HCT116 (cell line): ENCODE measurements at regions of chr17 and their contacts with region 1.

Region 1: DNA sequence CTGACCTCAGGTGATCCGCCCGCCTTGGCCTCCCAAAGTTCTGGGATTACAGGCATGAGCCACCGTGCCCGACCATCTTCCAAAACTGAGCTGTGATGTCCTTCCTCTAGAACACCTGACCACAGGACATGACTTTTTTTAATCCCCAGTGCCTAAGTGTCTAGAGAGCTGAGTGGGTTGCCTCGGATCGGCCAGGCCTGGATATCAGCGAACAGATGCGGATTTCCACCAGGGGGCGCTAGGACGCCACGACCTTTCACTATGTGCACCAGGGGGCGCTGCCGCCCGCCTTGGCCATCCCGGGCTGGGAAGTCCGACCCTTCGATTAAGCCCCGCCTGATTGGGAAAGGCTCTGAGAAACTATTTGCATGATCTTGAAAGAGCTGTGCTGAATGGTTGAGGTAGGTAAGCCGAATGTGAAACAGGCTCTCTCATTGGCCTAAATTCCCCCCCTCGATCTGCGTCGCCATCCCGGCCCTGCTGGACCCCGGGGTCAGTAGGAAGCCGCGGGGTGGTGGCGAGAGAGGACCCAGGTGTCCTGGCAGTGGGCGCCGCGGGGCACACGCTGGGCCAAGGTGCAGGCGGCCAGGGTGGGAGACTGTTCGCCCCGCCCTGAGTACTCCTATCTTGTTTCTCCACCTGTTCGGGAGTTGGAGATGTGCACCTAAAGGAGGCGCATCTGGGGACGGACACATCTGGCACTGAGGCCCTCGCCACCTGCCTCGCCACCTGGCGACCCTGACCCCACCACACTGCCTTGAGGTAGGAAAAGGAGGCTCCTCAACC is at the start of gene ACBD4:
- DNase-seq: peak; percentile 96
- ATAC-seq: peak; percentile 73
- H3K4me3 ChIP-seq: peak within 1 kb of the TSS; percentile 41 to 50
- H3K27ac ChIP-seq: peak within 1 kb of the TSS; percentile 38; the same call in 1 of the 2 replicates
- H3K4me1 ChIP-seq: peaks cover 16 to 36% of the 10 kb centered on the region in 2 experiments
- H3K27me3 ChIP-seq: no peaks in the 10 kb centered on the region
- CTCF ChIP-seq: peak; percentile 100
- POLR2A ChIP-seq: no peak
- RAD21 ChIP-seq: peak; percentile 100
- total RNA-seq, gene ACBD4: 13.6 TPM

Region 2: GRCh38 chr17:45060797-45061605 is 74.4 kb before region 1 on chr17 and contains the start of gene NMT1:
- CTCF ChIA-PET with region 1: interaction called, 7 read pairs
- POLR2A ChIA-PET with region 1: no interaction called
- RAD21 ChIA-PET with region 1: no interaction called
- intact Hi-C with region 1: loop called (anchors 5 kb)
- DNase-seq: peak; percentile 99
- ATAC-seq: peak; percentile 90
- H3K4me3 ChIP-seq: peak within 1 kb of the TSS; percentile 98 to 99
- H3K27ac ChIP-seq: peak within 1 kb of the TSS; percentile 93
- H3K4me1 ChIP-seq: peaks cover 10 to 19% of the 10 kb centered on the region in 2 experiments
- H3K27me3 ChIP-seq: no peaks in the 10 kb centered on the region
- CTCF ChIP-seq: no peak
- POLR2A ChIP-seq: peak; percentile 81
- RAD21 ChIP-seq: no peak
- total RNA-seq, gene NMT1: 173 TPM

Region 3: DNA sequence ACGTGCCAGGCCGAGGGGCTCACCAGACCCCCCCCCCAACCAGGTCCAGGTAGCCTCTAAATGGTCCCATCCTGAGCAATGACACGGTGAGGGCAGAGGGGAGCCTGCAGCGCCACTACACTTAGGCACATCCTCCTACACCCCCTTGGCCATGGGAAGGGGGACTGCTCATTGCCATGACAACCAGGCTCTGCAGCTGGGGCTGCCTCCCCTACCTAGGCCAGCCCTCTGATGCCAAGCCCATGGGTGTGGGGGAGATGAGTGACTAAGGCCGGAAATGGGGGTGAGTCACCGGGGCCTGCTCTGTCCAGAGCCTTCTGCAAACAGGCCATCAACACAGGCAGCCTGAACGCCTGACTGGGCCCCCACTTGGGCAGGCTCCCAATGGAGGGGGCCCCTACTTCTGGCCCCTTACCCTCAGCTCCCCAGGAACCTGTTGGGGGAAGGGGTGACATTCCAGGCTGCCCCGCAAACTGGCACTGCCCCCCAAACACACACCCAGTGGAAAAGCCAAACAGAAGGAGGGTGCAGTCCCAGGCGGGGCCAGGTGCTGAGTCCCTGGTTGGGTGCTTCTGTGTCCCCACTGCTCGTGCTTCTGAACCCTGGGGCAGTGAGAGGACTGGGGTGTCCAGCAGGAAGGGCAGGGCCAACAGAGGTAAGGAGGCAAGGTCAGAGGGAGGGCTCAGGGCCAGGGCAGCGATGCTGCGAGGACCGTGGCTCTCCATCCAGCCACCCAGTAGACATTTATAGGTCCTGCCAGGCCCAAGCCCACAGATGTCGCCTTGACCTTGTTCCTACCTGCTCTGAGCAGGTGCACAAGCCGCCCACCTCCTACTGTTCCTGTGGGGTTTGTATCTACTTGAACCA is 11.2 kb before region 1 on chr17:
- CTCF ChIA-PET with region 1: interaction called, 18 read pairs
- POLR2A ChIA-PET with region 1: interaction called, 3 read pairs
- RAD21 ChIA-PET with region 1: no interaction called
- intact Hi-C with region 1: no loop called
- DNase-seq: peak; percentile 69
- ATAC-seq: peak; percentile 76
- H3K4me3 ChIP-seq: peak overlapping the region; percentile 32 to 57
- H3K27ac ChIP-seq: peak overlapping the region; percentile 97
- H3K4me1 ChIP-seq: peaks cover 68 to 74% of the 10 kb centered on the region in 2 experiments
- H3K27me3 ChIP-seq: no peaks in the 10 kb centered on the region
- CTCF ChIP-seq: no peak
- POLR2A ChIP-seq: no peak
- RAD21 ChIP-seq: no peak

Region 4: DNA sequence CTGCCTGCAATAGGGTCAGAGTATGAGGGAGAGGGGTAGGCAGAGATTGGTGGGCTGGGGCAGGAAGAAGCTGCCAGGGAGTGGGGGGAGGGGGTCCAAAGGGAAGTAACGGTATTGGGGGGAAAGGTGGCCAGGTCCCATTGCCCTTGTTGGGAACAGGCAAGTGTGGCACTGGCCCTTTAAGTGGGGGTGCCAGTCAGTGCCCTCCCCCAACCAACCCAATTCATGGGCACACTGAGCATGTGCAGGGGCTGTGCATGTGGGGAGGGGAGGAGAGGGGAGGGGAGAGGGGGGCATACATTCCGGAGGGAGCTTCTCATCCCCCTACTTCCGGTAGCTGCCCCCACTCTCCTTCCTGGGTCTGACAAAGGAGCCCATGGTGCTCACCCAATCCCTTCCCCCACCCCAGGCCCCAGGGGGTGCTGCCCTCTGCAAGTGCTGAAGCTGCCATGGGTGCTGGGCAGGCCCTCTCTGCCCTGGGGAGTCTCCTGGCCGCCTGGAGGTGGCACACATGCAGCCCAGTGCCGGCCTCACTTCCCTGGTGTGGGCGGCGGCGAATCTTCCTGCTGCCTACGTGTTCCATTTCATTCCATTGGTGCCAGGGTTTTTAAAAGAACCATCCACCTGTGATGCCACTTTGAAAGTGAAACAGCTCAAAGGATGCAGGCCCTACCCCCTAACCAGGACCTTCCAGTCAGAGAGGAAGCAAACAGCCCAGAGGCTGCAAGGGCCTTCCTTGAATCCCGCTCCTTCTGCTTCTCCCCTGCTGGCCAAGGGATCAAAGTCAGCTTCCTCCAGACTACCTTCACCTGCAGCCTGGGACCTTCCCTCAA is 37.3 kb after region 1 on chr17:
- CTCF ChIA-PET with region 1: interaction called, 13 read pairs
- POLR2A ChIA-PET with region 1: interaction called, 5 read pairs
- RAD21 ChIA-PET with region 1: no interaction called
- intact Hi-C with region 1: no loop called
- DNase-seq: peak; percentile 87
- ATAC-seq: peak; percentile 78
- H3K4me3 ChIP-seq: peak overlapping the region; percentile 28 to 60
- H3K27ac ChIP-seq: peak overlapping the region; percentile 99
- H3K4me1 ChIP-seq: peaks cover 68 to 70% of the 10 kb centered on the region in 2 experiments
- H3K27me3 ChIP-seq: no peaks in the 10 kb centered on the region
- CTCF ChIP-seq: peak in 2 of 3 experiments; percentile 13 to 18; a peak in 1 of 6 replicates
- POLR2A ChIP-seq: peak; percentile 54
- RAD21 ChIP-seq: no peak

Region 5: DNA sequence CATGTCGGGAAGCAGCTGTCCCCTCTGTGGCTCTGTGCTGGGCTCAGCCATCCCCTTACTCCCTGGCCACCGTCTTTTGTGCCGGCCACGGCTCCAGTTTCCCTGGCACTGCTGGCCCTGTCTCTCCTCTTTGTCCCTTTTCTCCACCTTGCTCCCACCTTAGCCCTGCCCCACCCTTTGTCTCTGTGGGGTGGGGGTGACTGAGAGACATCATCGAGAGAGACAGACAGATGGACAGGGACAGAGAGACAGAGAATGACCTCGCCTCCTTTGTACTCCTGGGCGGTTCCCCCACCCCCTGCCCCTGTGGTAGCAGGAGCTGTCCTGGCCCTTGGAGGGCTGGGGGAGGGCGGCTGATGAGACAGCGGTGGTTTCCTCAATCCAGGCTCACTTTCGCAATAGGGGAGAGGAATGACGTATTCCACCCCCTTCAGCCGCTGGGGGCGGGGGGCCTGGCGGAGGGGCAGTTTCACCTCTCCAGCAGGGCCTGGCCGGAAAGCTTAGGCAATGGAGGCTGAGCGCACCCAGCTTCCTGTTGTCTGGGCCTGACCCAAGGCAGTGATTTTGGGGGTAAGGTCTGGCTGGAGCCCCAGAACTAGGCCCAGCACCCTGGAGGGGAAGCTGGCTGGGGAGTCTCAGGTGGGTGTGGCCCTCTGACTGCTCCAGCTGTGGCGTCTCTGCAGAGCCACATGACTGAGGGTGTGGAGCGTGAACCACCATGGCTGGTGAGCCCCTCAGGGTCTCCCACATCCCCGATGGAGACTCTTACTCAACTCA is 93.6 kb after region 1 on chr17:
- CTCF ChIA-PET with region 1: interaction called, 55 read pairs
- POLR2A ChIA-PET with region 1: interaction called, 4 read pairs
- RAD21 ChIA-PET with region 1: interaction called, 6 to 7 read pairs
- intact Hi-C with region 1: no loop called
- DNase-seq: no peak
- ATAC-seq: peak; percentile 36
- H3K4me3 ChIP-seq: peak overlapping the region; percentile 4 to 8; a peak in 1 of 4 replicates
- H3K27ac ChIP-seq: peak overlapping the region; percentile 26; the same call in 1 of the 2 replicates
- H3K4me1 ChIP-seq: peaks cover 33 to 76% of the 10 kb centered on the region in 2 experiments
- H3K27me3 ChIP-seq: no peaks in the 10 kb centered on the region
- CTCF ChIP-seq: no peak
- POLR2A ChIP-seq: no peak
- RAD21 ChIP-seq: no peak

Region 6: GRCh38 chr17:45428050-45428617 is 292.7 kb after region 1 on chr17:
- CTCF ChIA-PET with region 1: interaction called, 12 read pairs
- POLR2A ChIA-PET with region 1: no interaction called
- RAD21 ChIA-PET with region 1: no interaction called
- intact Hi-C with region 1: no loop called
- DNase-seq: peak; percentile 57
- ATAC-seq: peak; percentile 35
- H3K4me3 ChIP-seq: peak overlapping the region; percentile 3 to 8; a peak in 1 of 4 replicates
- H3K27ac ChIP-seq: no peak overlapping the region
- H3K4me1 ChIP-seq: peaks cover 16 to 56% of the 10 kb centered on the region in 2 experiments
- H3K27me3 ChIP-seq: no peaks in the 10 kb centered on the region
- CTCF ChIP-seq: peak; percentile 93 to 99 (median 99)
- POLR2A ChIP-seq: no peak
- RAD21 ChIP-seq: peak; percentile 98